MCF 10A (cell line): ENCODE measurements at regions of chr3 and their contacts with region 1.

Region 1: GRCh38 chr3:72818092-72818773 is 30.0 kb downstream of the SHQ1 start:
- DNase-seq: peak; percentile 37
- H3K4me3 Mint-ChIP-seq: no peak overlapping the region
- H3K27ac Mint-ChIP-seq: no peak overlapping the region
- H3K4me1 Mint-ChIP-seq: peaks cover 6% of the 10 kb centered on the region
- H3K27me3 Mint-ChIP-seq: no peaks in the 10 kb centered on the region
- CTCF ChIP-seq: peak; percentile 80

Region 2: GRCh38 chr3:71875461-71875947 is 942.7 kb before region 1 on chr3:
- CTCF ChIA-PET with region 1: interaction called, 130 read pairs
- POLR2A ChIA-PET with region 1: interaction called, 5 read pairs
- intact Hi-C with region 1: loop called (anchors 1 kb)
- DNase-seq: peak; percentile 79
- H3K4me3 Mint-ChIP-seq: no peak overlapping the region
- H3K27ac Mint-ChIP-seq: no peak overlapping the region
- H3K4me1 Mint-ChIP-seq: no peaks in the 10 kb centered on the region
- H3K27me3 Mint-ChIP-seq: peaks cover 4% of the 10 kb centered on the region
- CTCF ChIP-seq: peak; percentile 87

Region 3: GRCh38 chr3:71955240-71956068 is 862.8 kb before region 1 on chr3:
- CTCF ChIA-PET with region 1: interaction called, 80 read pairs
- POLR2A ChIA-PET with region 1: interaction called, 6 read pairs
- intact Hi-C with region 1: loop called (anchors 1 kb)
- DNase-seq: peak; percentile 78
- H3K4me3 Mint-ChIP-seq: no peak overlapping the region
- H3K27ac Mint-ChIP-seq: no peak overlapping the region
- H3K4me1 Mint-ChIP-seq: no peaks in the 10 kb centered on the region
- H3K27me3 Mint-ChIP-seq: peaks cover 22% of the 10 kb centered on the region
- CTCF ChIP-seq: peak; percentile 56

Region 4: GRCh38 chr3:72270072-72270681 is 548.1 kb before region 1 on chr3:
- CTCF ChIA-PET with region 1: interaction called, 4 read pairs
- POLR2A ChIA-PET with region 1: no interaction called
- intact Hi-C with region 1: loop called (anchors 5 kb)
- DNase-seq: peak; percentile 93
- H3K4me3 Mint-ChIP-seq: peak overlapping the region; percentile 15
- H3K27ac Mint-ChIP-seq: peak overlapping the region; percentile 88
- H3K4me1 Mint-ChIP-seq: peaks cover 32% of the 10 kb centered on the region
- H3K27me3 Mint-ChIP-seq: peaks cover 7% of the 10 kb centered on the region
- CTCF ChIP-seq: no peak

Region 5: DNA sequence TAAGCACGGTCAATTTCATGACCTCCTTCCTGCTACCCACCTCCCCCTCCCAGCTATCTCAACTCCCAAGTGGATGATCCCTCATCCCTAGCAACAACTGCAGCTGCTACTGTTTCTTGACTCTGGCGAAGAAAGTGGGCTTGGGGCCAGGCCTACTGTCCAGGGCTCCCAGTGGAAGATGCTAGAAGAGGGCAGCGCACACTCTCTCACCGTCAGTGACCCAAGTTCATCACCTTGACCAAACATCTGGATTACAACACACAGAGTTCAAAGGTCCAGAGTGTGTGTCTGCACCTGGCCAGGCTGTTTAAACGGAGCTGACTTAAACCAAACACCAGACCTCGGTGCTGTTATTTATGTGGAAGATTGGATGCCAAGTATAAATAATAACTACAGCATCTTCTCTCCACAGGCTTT is 355.6 kb before region 1 on chr3:
- CTCF ChIA-PET with region 1: no interaction called
- POLR2A ChIA-PET with region 1: no interaction called
- intact Hi-C with region 1: no loop called
- DNase-seq: no peak
- H3K4me3 Mint-ChIP-seq: no peak overlapping the region
- H3K27ac Mint-ChIP-seq: no peak overlapping the region
- H3K4me1 Mint-ChIP-seq: no peaks in the 10 kb centered on the region
- H3K27me3 Mint-ChIP-seq: peaks cover 33% of the 10 kb centered on the region
- CTCF ChIP-seq: no peak

Region 6: DNA sequence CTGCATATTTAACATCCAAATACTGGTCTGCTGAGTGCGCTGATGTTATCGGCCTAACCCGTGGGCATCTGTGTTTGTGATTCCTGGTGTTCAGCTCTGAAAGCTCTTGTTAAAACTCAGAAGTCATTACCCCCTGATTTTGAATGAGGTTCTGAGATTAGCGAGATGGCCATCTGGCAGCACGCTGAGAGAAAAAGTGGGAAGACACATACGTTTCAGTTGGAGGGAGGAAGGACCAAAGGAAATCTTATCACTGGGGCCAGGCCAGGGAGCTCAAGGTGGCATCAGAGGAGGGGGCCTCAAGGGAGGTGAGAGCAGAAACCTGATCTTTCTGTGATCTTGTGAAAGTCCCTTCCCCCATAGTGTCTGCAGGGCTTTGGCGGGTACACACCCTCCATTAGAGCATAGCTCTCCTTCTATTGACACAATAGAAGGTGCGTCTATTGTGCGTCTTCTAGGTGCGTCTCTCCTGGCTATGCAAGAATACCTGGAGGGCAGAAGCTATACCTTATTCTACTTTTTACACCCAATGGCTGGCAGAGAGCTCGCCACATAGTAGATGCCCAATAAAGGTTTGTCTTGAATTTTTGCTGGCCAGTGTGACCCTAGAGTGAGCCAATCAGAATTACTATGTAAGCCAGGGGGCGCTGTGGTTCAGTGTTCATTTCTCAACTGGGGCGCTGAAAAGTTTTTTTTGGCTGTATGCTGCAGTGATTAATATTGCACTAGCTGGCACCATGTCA is 152.4 kb before region 1 on chr3:
- CTCF ChIA-PET with region 1: interaction called, 110 read pairs
- POLR2A ChIA-PET with region 1: interaction called, 3 read pairs
- intact Hi-C with region 1: loop called (anchors 1 kb)
- DNase-seq: peak; percentile 79
- H3K4me3 Mint-ChIP-seq: no peak overlapping the region
- H3K27ac Mint-ChIP-seq: no peak overlapping the region
- H3K4me1 Mint-ChIP-seq: peaks cover 21% of the 10 kb centered on the region
- H3K27me3 Mint-ChIP-seq: peaks cover 8% of the 10 kb centered on the region
- CTCF ChIP-seq: peak; percentile 67

Region 7: GRCh38 chr3:72702997-72703396 is 115.2 kb before region 1 on chr3:
- CTCF ChIA-PET with region 1: no interaction called
- POLR2A ChIA-PET with region 1: no interaction called
- intact Hi-C with region 1: no loop called
- DNase-seq: no peak
- H3K4me3 Mint-ChIP-seq: no peak overlapping the region
- H3K27ac Mint-ChIP-seq: no peak overlapping the region
- H3K4me1 Mint-ChIP-seq: no peaks in the 10 kb centered on the region
- H3K27me3 Mint-ChIP-seq: no peaks in the 10 kb centered on the region
- CTCF ChIP-seq: no peak